Heart right ventricle (tissue), 16 donors: ENCODE measurements at regions of chr9 and their contacts with region 1.

Region 1: DNA sequence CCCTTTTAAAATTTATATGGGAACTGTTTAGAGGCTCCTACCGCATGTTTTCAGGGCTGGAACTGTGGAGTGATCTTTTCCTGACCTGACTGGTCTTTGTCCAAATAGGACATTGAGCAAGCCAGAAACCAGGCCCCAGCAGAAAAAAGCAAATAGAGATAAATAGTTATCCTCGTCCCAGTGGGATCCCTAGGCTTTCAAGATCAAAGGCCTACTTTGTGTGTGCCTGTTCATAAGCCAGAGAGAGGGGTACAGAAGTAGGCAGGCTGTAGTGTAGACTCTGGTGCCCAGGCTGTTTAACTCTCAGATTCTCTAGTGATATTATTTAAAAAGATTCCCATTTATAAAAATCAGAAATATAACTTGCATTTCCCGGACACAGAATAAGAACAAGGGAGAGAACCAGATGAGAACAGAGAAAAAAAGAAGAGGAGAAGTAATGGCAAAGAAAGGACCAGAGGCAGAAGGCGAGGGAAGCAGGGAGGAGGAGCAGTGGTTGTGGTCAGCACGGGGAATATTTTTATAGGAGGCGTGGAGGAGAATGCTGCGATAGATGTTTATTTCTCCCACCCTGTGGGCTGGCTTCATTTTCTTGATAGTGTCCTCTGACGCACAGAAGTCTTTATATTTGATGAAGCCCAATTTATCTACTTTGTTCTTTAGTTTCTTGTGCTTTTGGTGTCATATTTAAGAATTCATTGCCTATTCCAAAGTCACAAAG is 101.2 kb downstream of the AOPEP start:
- DNase-seq: peak in 1 of 2 donors; percentile 33
- ATAC-seq: peak; percentile 49 to 85 (median 72)
- H3K4me3 ChIP-seq: no peak overlapping the region
- H3K27ac ChIP-seq: peak overlapping the region in 8 of 10 donors; percentile 5 to 61 (median 47)
- H3K4me1 ChIP-seq: peaks cover 0 to 59% (median 37%) of the 10 kb centered on the region in 9 donors
- H3K27me3 ChIP-seq: no peaks in the 10 kb centered on the region
- CTCF ChIP-seq: no peak

Region 2: GRCh38 chr9:94860968-94861871 is 33.5 kb after region 1 on chr9:
- intact Hi-C with region 1: loop called in 1 of 10 experiments (anchors 5 kb)
- DNase-seq: no peak
- ATAC-seq: peak in 5 of 8 donors; percentile 8 to 43 (median 34)
- H3K4me3 ChIP-seq: no peak overlapping the region
- H3K27ac ChIP-seq: peak overlapping the region in 2 of 10 donors; percentile 22 to 74
- H3K4me1 ChIP-seq: peaks cover 4 to 49% (median 27%) of the 10 kb centered on the region in 9 donors
- H3K27me3 ChIP-seq: no peaks in the 10 kb centered on the region
- CTCF ChIP-seq: no peak